Activated CD4-positive, alpha-beta T cell treated with anti-CD3 and anti-CD28 coated beads, Interleukin-2, amount 10 ng/mL, durations not matched to agents 24 days and 14 days (primary cell): ENCODE measurements at regions of chr1 and their contacts with region 1.

Region 1: DNA sequence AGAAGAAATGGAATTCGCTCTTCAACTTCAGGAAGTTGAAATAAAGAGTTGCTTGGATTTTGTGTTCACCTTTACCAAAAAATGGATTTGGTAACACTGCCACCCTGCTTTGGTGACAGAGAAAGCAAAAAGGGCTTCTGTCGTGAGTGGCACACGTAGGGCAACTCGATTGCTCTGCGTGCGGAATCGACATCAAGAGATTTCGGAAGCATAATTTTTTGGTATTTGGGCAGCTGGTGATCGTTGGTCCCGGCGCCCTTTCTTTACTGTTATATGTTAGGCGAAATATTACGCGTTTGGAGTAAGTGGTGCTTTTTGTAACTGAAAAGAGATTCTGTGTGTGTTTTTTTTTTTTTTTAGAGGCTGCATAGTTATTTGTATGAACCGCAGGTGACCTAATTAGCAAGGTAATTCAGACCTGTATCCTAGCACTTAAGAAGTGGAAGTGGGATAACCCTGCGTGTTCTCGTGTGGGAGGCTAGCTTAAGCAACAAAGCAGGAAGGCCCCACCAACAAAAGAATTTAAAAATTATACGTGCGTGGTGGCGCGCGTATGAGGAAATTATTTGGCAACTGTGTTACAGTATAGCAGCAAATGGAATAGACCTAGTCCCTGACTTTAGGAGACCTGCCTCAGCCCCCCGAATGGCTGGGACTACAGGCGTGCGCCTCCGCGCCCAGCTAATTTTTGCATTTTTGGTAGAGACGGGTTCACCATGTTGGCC is at the start of gene RNU11:
- DNase-seq: peak; percentile 96
- H3K4me3 Mint-ChIP-seq: peak within 1 kb of the TSS; percentile 80
- H3K27ac Mint-ChIP-seq: peak within 1 kb of the TSS; percentile 97
- H3K4me1 Mint-ChIP-seq: peaks cover 28% of the 10 kb centered on the region
- H3K27me3 Mint-ChIP-seq: no peaks in the 10 kb centered on the region
- total RNA-seq, gene RNU11: not detected in 2 replicates

Region 2: GRCh38 chr1:28552758-28553663 is 95.6 kb before region 1 on chr1 and contains the start of gene TRNAU1AP:
- intact Hi-C with region 1: loop called (anchors 2 kb)
- DNase-seq: peak; percentile 99
- H3K4me3 Mint-ChIP-seq: peak within 1 kb of the TSS; percentile 100
- H3K27ac Mint-ChIP-seq: peak within 1 kb of the TSS; percentile 99
- H3K4me1 Mint-ChIP-seq: peaks cover 17% of the 10 kb centered on the region
- H3K27me3 Mint-ChIP-seq: no peaks in the 10 kb centered on the region
- total RNA-seq, gene TRNAU1AP: 47.5 and 50.7 TPM in 2 replicates

Region 3: DNA sequence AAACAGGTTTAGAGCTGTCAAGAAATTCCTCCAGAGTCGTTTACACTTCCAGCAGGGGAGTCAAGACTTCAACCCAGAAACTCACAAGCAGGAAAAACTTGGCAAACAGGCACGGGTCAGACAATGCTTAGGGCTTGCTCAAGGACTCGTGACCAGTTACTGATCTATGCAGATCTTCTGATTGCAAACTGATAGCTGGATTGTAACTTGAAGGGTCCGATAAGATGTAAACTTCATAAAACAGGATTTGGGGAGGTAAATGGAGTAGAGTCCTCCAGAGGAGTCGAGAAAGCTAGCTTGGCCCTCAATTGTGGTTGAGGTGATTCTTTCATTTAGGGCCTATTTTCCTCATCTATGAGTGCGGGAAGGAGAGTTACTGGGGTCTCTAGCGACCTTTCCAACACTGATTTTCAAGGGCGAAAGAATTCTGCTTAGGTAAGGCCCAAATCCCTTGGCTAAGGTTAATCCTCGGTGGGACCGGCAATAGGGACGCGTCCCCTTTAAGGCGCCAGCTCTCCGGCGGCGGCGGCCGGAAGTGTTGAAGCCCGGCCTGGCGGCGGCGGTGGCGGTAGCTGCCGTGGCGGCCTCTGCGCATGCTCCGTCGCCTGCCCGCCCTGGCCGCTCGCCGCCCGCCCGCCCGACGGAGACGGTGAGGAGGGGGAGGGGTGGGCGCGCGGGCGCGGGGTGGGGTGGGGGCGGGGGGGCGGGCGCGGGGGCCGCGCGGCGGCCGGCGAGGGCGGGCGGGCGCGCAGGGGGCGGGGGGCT is 19.7 kb after region 1 on chr1 and contains the start of gene GMEB1:
- intact Hi-C with region 1: loop called (anchors 1 kb)
- DNase-seq: peak; percentile 96
- H3K4me3 Mint-ChIP-seq: peak within 1 kb of the TSS; percentile 93
- H3K27ac Mint-ChIP-seq: peak within 1 kb of the TSS; percentile 98
- H3K4me1 Mint-ChIP-seq: peaks cover 10% of the 10 kb centered on the region
- H3K27me3 Mint-ChIP-seq: no peaks in the 10 kb centered on the region
- total RNA-seq, gene GMEB1: 26.1 and 26.3 TPM in 2 replicates

Region 4: GRCh38 chr1:28790377-28791351 is 142.0 kb after region 1 on chr1:
- intact Hi-C with region 1: no loop called
- DNase-seq: no peak
- H3K4me3 Mint-ChIP-seq: no peak overlapping the region
- H3K27ac Mint-ChIP-seq: no peak overlapping the region
- H3K4me1 Mint-ChIP-seq: peaks cover 2% of the 10 kb centered on the region
- H3K27me3 Mint-ChIP-seq: peaks cover 21% of the 10 kb centered on the region

Region 5: GRCh38 chr1:28877132-28877781 is 228.6 kb after region 1 on chr1:
- intact Hi-C with region 1: loop called (anchors 2 kb)
- DNase-seq: peak; percentile 93
- H3K4me3 Mint-ChIP-seq: no peak overlapping the region
- H3K27ac Mint-ChIP-seq: no peak overlapping the region
- H3K4me1 Mint-ChIP-seq: peaks cover 10% of the 10 kb centered on the region
- H3K27me3 Mint-ChIP-seq: peaks cover 15% of the 10 kb centered on the region

Region 6: DNA sequence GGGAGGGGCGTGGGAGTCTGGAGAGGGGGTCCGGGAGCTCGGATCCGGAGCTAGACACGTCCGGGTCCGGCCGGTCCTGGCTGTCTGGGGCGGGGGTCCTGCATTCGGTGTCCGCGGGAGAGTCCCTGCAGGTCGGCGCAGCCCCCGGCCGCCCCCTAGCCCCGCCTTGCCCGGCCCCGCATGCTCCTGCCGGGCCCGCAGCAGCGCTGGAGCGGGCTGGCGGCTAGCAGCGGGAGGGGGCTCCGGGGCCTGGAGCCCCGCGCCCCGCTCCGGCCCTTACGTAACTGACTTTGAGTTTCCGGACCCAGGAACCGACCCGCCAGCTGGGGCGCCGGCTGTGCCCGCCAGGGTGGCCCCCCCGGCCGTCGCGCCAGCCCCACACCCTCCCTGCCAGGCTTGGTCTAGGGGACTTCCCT is 238.8 kb after region 1 on chr1:
- intact Hi-C with region 1: no loop called
- DNase-seq: peak; percentile 81
- H3K4me3 Mint-ChIP-seq: peak overlapping the region; percentile 91
- H3K27ac Mint-ChIP-seq: peak overlapping the region; percentile 87
- H3K4me1 Mint-ChIP-seq: peaks cover 48% of the 10 kb centered on the region
- H3K27me3 Mint-ChIP-seq: no peaks in the 10 kb centered on the region